ENCODE measurements at regions of chr17 and their contacts with region 1.

Region 1: DNA sequence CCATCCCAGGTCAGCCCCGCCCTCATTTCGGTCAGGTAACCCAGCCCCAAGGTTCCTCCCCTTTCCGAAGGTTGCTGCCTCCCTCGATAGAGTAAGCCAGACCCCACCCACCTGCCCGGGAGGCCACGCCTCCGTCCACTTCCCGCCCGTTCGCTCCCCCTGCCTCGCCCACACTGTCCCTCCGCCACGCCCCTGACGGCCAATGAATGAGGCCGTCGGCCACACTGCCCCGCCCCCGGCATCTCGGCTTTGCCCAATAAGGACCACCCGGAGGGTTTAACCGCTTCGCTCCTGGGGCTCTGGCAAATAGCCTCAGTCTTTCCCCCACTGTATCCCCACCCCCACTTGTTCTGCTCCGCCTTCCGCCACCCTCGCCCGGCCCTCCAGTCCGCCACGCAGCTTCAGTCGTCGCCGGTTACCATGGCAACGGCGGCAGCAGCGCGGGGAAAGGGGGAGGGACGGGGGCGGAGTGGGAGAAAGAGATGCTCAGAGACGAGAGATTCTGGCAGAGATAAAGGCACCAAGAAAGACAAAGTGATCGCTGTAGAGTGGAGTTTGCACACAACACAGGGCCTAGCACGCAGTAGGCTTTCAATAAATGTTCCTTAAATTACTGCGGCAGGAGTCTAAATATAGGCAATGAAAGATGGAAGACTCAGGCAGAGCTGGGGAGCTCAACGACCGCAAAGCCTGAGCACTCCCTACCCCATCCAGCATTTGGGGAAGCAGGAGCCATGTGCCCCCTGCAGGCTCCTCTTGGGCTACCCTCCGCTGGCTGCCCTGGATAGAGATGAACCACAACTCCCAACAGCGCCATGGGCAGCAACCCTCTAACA is 5.1 kb downstream of the DLG4 start:
- DNase-seq: peak; percentile 99
- H3K4me3 ChIP-seq: peak overlapping the region in 2 of 3 experiments; percentile 43 to 44
- H3K27ac ChIP-seq: peak overlapping the region; percentile 63
- H3K4me1 ChIP-seq: peaks cover 33% of the 10 kb centered on the region
- H3K27me3 ChIP-seq: no peaks in the 10 kb centered on the region
- CTCF ChIP-seq: peak; percentile 48 to 74
- POLR2A ChIP-seq: no peak

Region 2: GRCh38 chr17:7306911-7307686 is 92.6 kb after region 1 on chr17 and contains the start of gene EIF5A:
- CTCF ChIA-PET with region 1: no interaction called
- POLR2A ChIA-PET with region 1: no interaction called
- dilution Hi-C with region 1: no loop called
- intact Hi-C with region 1: loop called (anchors 2 kb)
- DNase-seq: peak; percentile 100
- H3K4me3 ChIP-seq: peak within 1 kb of the TSS; percentile 71 to 93 (median 87)
- H3K27ac ChIP-seq: peak within 1 kb of the TSS; percentile 83
- H3K4me1 ChIP-seq: peaks cover 12% of the 10 kb centered on the region
- H3K27me3 ChIP-seq: no peaks in the 10 kb centered on the region
- CTCF ChIP-seq: no peak
- POLR2A ChIP-seq: peak; percentile 83
- total RNA-seq, gene EIF5A: 847 and 859 TPM in 2 replicates

Measured in endothelial cell of umbilical vein (primary cell).